OCI-LY7 (cell line): ENCODE measurements at regions of chr5 and their contacts with region 1.

Region 1: GRCh38 chr5:74608736-74609601 is 31.6 kb downstream of the ENC1 start:
- DNase-seq: no peak
- H3K4me3 ChIP-seq: no peak overlapping the region
- H3K27ac ChIP-seq: no peak overlapping the region
- H3K4me1 ChIP-seq: no peaks in the 10 kb centered on the region
- CTCF ChIP-seq: no peak

Region 2: GRCh38 chr5:74556631-74557595 is 52.1 kb before region 1 on chr5:
- CTCF ChIA-PET with region 1: no interaction called
- POLR2A ChIA-PET with region 1: no interaction called
- intact Hi-C with region 1: loop called (anchors 5 kb)
- DNase-seq: no peak
- H3K4me3 ChIP-seq: no peak overlapping the region
- H3K27ac ChIP-seq: no peak overlapping the region
- H3K4me1 ChIP-seq: peaks cover 9% of the 10 kb centered on the region
- CTCF ChIP-seq: no peak